MCF 10A (cell line): ENCODE measurements at regions of chr1 and their contacts with region 1.

Region 1: GRCh38 chr1:11681071-11681771 is at the start of gene MAD2L2:
- DNase-seq: peak; percentile 81
- H3K4me3 Mint-ChIP-seq: peak within 1 kb of the TSS; percentile 88
- H3K27ac Mint-ChIP-seq: peak within 1 kb of the TSS; percentile 79
- H3K4me1 Mint-ChIP-seq: peaks cover 5% of the 10 kb centered on the region
- H3K27me3 Mint-ChIP-seq: no peaks in the 10 kb centered on the region
- CTCF ChIP-seq: no peak
- total RNA-seq, gene MAD2L2: 40.1 and 46.3 TPM in 2 replicates

Region 2: DNA sequence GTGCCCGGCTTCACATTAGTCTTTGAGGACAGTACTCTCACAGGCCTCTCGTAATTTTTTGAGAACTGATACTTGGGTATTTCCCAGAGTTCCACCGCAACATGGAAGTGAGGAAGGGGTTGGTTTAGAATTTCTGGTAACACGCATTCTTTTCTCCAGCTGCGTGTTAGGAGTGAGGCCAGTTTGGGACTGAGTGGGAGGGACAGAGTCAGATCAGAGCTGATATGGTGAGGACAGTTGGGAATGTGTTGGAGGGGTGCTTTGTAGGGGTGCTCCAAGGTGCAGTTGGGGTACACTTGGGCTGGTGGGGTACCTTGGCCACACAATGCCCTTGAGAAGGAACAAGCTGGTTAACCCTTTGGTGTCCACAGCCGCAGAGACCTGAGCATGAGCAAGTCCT is 10.5 kb before region 1 on chr1:
- CTCF ChIA-PET with region 1: interaction called, 3 read pairs
- POLR2A ChIA-PET with region 1: no interaction called
- intact Hi-C with region 1: loop called (anchors 2 kb)
- DNase-seq: no peak
- H3K4me3 Mint-ChIP-seq: no peak overlapping the region
- H3K27ac Mint-ChIP-seq: no peak overlapping the region
- H3K4me1 Mint-ChIP-seq: no peaks in the 10 kb centered on the region
- H3K27me3 Mint-ChIP-seq: no peaks in the 10 kb centered on the region
- CTCF ChIP-seq: no peak